Activated B cell treated with CpG ODN at 0.5 μM for 24 hours (primary cell): ENCODE measurements at regions of chr7 and their contacts with region 1.

Region 1: DNA sequence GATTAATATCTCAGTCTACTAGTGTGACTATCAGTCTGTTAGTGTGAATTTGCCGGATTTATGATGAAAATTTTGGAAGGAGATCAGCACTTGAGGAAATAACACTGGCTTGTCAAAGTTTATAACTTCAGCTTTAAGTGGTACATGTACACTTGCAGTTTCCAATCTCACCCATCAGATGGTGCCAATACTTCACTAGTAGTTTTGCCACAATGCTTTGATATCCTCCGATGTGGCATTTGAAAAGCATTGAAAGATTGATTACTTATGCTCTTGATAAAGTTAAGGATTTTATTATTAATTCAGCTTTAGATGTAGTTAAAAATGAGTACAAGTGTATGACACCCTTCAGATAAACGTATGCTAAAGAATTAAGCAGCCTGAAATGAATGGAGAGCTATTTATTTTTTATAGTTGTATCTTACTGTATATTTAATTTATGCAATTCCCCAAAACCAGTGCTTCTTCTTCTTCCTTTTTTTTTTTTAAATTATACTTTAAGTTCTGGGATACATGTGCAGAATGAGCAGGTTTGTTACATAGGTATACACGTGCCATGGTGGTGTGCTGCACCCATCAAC is 98.2 kb downstream of the ANLN start:
- DNase-seq: no peak
- ATAC-seq: no peak
- H3K4me3 Mint-ChIP-seq: no peak overlapping the region
- H3K27ac Mint-ChIP-seq: no peak overlapping the region
- H3K4me1 Mint-ChIP-seq: no peaks in the 10 kb centered on the region
- H3K27me3 Mint-ChIP-seq: peaks cover 8% of the 10 kb centered on the region
- CTCF ChIP-seq: no peak

Region 2: DNA sequence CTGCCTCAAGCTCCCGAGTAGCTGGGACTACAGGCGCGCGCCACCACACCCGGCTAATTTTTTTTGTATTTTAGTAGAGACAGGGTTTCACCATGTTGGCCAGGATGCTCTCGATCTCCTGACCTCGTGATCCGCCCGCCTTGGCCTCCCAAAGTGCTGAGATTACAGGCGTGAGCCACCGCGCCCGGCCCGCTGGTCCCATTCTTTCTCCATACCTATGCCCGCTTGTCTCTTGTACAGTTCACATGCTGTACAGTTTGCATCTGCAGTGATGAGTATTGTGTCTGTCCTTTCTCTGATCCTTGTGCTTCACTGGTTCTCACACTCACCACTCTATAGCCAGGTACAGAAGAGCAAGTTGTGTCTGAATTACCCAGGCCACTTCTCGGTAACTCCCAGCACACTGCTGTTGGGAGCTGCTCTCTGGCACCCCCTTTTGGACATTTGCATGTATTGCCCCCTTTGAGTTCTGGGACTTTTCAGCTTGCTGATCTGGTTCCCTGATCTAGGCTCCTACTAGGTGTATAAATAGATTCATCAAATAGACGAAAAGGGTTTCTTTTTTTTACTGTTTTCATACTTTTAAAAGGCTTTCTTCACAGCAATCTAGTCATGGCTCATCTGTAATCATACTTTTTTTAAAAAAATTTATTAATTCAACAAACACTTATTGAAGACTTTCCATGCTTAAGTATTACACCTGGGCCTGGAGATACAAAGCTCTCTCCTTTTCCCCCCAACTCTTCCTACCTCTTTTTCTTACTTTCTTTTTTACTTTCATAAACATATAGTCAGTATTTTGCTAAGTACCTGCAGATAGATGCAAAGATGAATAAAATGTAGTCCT is 183.0 kb after region 1 on chr7:
- CTCF ChIA-PET with region 1: interaction called, 22 read pairs
- POLR2A ChIA-PET with region 1: no interaction called
- intact Hi-C with region 1: loop called (anchors 1 kb)
- DNase-seq: no peak
- ATAC-seq: peak; percentile 72
- H3K4me3 Mint-ChIP-seq: no peak overlapping the region
- H3K27ac Mint-ChIP-seq: no peak overlapping the region
- H3K4me1 Mint-ChIP-seq: no peaks in the 10 kb centered on the region
- H3K27me3 Mint-ChIP-seq: no peaks in the 10 kb centered on the region
- CTCF ChIP-seq: no peak

Region 3: GRCh38 chr7:36726806-36727503 is 239.1 kb after region 1 on chr7:
- CTCF ChIA-PET with region 1: no interaction called
- POLR2A ChIA-PET with region 1: interaction called, 10 read pairs
- intact Hi-C with region 1: no loop called
- DNase-seq: no peak
- ATAC-seq: no peak
- H3K4me3 Mint-ChIP-seq: no peak overlapping the region
- H3K27ac Mint-ChIP-seq: no peak overlapping the region
- H3K4me1 Mint-ChIP-seq: peaks cover 23% of the 10 kb centered on the region
- H3K27me3 Mint-ChIP-seq: no peaks in the 10 kb centered on the region
- CTCF ChIP-seq: no peak

Region 4: GRCh38 chr7:36784991-36785940 is 297.4 kb after region 1 on chr7:
- CTCF ChIA-PET with region 1: no interaction called
- POLR2A ChIA-PET with region 1: no interaction called
- intact Hi-C with region 1: loop called (anchors 5 kb)
- DNase-seq: peak; percentile 32
- ATAC-seq: peak; percentile 99
- H3K4me3 Mint-ChIP-seq: peak overlapping the region; percentile 3
- H3K27ac Mint-ChIP-seq: peak overlapping the region; percentile 1
- H3K4me1 Mint-ChIP-seq: peaks cover 17% of the 10 kb centered on the region
- H3K27me3 Mint-ChIP-seq: peaks cover 5% of the 10 kb centered on the region
- CTCF ChIP-seq: no peak

Region 5: DNA sequence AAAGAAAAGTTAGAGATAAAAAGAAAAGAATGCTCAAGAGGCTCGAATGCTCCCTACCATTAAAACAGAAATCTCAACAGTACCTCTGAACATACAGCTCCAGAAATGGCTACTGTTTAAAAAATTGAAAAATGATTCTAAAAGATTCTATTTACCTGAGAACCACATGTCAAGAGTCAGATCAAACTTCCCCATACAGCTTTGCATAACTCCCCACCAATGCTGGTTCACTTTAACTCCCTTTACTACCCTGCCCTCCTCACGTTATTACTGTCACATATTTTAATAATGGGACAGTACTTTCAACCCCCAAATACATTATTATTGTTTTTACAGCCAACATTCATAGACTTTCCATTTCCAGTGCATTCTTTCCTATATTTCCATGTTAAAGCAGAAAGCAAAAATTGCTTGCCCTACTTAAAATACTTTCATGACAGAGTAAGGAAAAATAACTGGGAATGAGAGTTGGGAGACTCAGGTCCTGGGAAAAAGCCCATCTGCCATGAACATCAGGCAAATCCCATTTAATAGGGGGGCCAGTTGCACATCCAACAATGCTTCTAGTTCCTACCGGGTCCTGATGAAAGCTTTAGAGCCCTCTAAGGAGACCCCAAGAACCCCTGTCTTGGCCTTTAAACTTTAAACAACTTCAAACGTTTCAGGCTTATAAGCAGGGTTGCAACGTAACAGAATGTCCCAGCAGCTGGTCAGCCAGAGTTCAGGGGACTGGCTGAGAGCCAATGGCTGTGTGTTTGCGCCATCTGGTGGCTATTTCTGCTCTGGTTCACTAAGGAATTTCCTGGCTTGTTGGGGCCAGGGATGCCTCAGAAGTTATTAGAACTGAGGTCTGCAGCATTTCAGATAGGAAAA is 713.4 kb after region 1 on chr7:
- CTCF ChIA-PET with region 1: interaction called, 30 read pairs
- POLR2A ChIA-PET with region 1: no interaction called
- intact Hi-C with region 1: loop called (anchors 1 kb)
- DNase-seq: no peak
- ATAC-seq: peak; percentile 37
- H3K4me3 Mint-ChIP-seq: no peak overlapping the region
- H3K27ac Mint-ChIP-seq: peak overlapping the region; percentile 59
- H3K4me1 Mint-ChIP-seq: peaks cover 19% of the 10 kb centered on the region
- H3K27me3 Mint-ChIP-seq: no peaks in the 10 kb centered on the region
- CTCF ChIP-seq: no peak

Region 6: GRCh38 chr7:37504801-37505200 is 1017.0 kb after region 1 on chr7:
- CTCF ChIA-PET with region 1: no interaction called
- POLR2A ChIA-PET with region 1: no interaction called
- intact Hi-C with region 1: loop called (anchors 10 kb)
- DNase-seq: no peak
- ATAC-seq: no peak
- H3K4me3 Mint-ChIP-seq: no peak overlapping the region
- H3K27ac Mint-ChIP-seq: no peak overlapping the region
- H3K4me1 Mint-ChIP-seq: no peaks in the 10 kb centered on the region
- H3K27me3 Mint-ChIP-seq: peaks cover 9% of the 10 kb centered on the region
- CTCF ChIP-seq: no peak